GM10248 (cell line): ENCODE measurements at regions of chr17 and their contacts with region 1.

Region 1: GRCh38 chr17:44878627-44879221 is 20.5 kb downstream of the EFTUD2 start:
- DNase-seq: peak; percentile 36
- CTCF ChIP-seq: peak; percentile 48

Region 2: DNA sequence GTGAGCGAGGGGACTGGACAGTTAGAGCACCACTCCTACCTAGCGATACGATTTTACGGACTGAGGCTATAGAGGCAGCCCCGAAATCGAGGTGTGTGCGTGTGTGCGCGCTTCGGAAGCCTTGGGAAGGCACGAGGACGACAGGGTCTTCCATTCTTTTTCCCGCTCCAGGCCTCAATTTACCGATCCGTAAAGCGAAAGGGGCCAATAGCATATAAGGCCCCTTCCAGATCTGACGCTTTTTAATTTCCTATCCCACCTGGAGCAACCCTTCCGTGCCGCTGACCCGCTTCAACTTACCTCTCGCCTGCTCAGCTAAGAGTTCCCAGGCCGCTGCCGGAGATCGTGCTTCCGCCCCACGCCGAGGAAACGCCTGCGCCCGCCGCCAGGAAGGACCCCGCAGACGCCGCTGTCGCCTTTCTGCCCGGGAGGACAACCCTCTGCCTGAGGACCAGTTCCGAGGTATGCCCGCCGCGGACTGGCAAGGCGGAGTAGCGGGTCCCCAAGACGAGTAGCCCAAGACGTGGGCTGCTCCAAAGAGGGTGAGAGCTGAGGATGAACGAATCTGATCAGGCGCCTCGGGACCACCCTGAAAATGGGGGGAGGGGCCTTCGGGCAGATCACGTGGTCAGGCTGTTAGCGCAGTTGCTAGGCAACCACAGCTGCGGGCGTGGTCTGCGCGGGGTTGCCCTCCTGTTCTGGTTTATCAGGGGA is 20.5 kb after region 1 on chr17 and contains the start of gene EFTUD2:
- CTCF ChIA-PET with region 1: interaction called, 10 read pairs
- POLR2A ChIA-PET with region 1: no interaction called
- DNase-seq: peak; percentile 95
- CTCF ChIP-seq: no peak

Region 3: GRCh38 chr17:44971776-44972483 is 93.2 kb after region 1 on chr17:
- CTCF ChIA-PET with region 1: no interaction called
- POLR2A ChIA-PET with region 1: no interaction called
- DNase-seq: no peak
- CTCF ChIP-seq: no peak